ENCODE measurements at regions of chr11 and their contacts with region 1.

Region 1: DNA sequence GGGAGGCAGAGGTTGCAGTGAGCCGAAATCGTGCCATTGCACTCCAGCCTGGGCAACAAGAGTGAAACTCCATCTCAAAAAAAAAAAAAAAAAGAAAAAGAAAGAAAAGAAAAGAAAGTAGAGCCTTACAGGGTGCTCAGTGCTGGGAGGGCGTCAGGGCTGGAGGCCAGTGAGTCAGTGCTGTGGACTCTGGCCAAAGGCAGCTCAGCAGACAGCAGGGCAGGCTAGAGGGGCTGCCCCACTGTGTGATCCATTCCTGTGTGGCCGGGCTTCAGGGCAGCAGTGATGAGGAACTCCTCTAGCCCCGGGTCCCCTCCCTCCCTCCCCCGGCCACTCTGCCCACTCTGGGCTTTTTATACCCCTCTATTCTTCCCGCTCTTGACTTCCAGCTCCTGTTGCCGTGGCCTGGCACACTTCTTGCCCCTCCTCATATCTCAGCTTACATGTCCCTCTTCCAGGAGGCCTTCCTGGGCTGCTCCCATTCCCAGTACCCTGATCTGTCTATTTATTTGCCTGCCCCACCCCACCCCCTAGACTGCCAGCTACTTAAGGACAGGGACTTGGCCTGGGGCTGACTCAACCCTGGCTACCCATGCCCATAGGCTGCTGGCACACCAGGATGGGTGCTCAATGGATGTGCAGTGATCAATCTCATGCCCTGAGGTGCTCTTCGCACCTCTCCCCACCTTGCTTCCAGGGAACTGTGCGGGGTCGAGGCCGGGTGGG is 10.1 kb downstream of the SYT12 start:
- DNase-seq: peak; percentile 94
- ATAC-seq: peak; percentile 88
- H3K4me3 ChIP-seq: no peak overlapping the region
- H3K27ac ChIP-seq: peak overlapping the region; percentile 62
- H3K4me1 ChIP-seq: peaks cover 16% of the 10 kb centered on the region
- H3K27me3 ChIP-seq: 0 out of 2 replicates have a peak, but pooled peaks cover 2% of the 10 kb centered on the region
- CTCF ChIP-seq: no peak
- POLR2A ChIP-seq: no peak
- RAD21 ChIP-seq: peak; percentile 28

Region 2: GRCh38 chr11:66842896-66843775 is 189.9 kb before region 1 on chr11 and contains the start of gene RCE1:
- CTCF ChIA-PET with region 1: no interaction called
- POLR2A ChIA-PET with region 1: no interaction called
- dilution Hi-C with region 1: no loop called
- in situ Hi-C with region 1: no loop called
- intact Hi-C with region 1: loop called (anchors 5 kb)
- DNase-seq: peak; percentile 85
- ATAC-seq: peak; percentile 90
- H3K4me3 ChIP-seq: peak within 1 kb of the TSS; percentile 81
- H3K27ac ChIP-seq: peak within 1 kb of the TSS; percentile 97
- H3K4me1 ChIP-seq: peaks cover 6% of the 10 kb centered on the region
- H3K27me3 ChIP-seq: no peaks in the 10 kb centered on the region
- CTCF ChIP-seq: no peak
- POLR2A ChIP-seq: peak; percentile 94
- RAD21 ChIP-seq: no peak
- total RNA-seq, gene RCE1: 5.6 and 6.6 TPM in 2 replicates

Region 3: DNA sequence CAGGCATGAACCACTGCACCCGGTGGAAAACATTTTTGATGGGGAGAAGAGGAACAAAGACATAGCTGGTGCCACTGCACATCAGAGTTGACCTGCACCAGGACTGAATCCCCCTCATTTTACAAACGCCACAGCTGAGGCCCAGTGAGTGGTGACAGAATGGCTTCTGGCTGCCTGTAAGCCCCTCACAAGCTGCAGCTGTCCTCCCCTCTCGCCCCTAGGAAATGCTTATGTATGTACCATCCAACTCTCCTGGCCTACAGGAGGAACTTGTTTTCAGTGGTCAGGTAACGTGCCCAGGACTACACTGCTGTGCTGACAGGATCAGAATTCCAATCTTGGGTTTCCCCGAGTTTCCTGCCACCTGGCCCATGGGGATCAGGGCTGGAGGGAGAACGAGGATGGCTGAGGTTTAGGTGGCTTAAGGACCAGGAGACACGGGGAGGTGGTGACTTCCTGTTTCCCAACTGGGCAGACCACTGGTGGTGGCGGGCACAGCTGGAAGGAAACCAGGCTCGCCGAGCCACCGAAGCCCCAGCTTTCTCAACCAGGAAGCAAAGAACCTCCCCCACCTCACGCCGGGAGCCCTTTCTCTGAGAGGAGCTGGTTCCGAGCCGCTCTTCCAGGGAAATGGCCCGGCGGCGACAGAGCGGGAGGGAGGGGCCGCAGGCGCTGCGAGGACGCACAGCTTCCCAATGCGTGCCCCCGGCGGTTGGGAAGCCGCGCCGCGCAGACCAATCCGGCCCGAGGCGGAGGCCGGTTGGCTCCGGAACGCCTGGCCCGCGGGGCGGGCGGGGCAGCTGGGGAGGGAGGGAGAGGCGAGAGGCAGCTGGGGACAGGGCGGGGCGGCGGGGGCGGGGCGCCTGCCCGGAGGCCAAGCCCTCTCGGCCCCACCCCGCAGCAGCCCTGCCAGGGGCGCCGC is 177.2 kb before region 1 on chr11:
- CTCF ChIA-PET with region 1: no interaction called
- POLR2A ChIA-PET with region 1: no interaction called
- dilution Hi-C with region 1: no loop called
- in situ Hi-C with region 1: no loop called
- intact Hi-C with region 1: loop called (anchors 5 kb)
- DNase-seq: peak; percentile 84
- ATAC-seq: peak; percentile 95
- H3K4me3 ChIP-seq: peak overlapping the region; percentile 57
- H3K27ac ChIP-seq: peak overlapping the region; percentile 78
- H3K4me1 ChIP-seq: peaks cover 4% of the 10 kb centered on the region
- H3K27me3 ChIP-seq: no peaks in the 10 kb centered on the region
- CTCF ChIP-seq: 0 out of 2 replicates have a peak, but pooled peaks have one; percentile 4
- POLR2A ChIP-seq: peak; percentile 78
- RAD21 ChIP-seq: no peak

Region 4: DNA sequence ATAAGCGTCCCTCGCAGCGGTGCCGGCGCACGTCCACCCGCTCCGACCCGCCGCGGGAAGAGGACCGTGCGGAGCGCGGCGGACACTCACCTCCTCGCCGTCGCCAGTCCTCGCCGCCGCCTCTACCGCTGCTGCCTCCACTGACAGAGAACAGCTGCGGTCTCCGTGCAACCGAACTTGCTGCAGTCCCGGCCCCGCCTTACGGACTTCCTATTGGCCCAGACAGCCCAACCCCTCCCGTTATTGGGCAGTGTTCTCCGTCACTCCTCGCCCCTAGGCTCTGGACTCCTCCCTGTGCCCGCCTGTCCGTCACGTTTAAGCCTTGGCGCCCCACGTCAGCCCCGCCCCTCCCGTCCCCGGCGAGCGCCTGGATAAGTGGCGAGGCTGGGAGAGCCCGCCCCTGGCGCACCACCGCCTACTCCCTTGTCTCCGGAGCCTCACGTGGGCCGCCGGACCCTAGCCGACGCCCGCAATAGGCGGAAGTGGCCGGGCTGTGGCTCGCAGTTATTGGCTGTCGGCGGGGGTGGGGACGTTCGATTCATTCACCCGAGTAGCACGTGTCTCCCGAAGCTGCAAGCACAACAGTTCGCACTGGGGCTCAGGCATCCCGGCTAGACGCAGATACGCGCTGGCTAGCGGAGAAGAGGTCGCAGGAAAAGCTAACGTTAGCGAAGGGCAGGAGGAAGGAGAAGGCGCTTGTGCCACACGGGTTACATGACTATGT is 74.6 kb before region 1 on chr11 and contains the start of gene PC:
- CTCF ChIA-PET with region 1: no interaction called
- POLR2A ChIA-PET with region 1: no interaction called
- dilution Hi-C with region 1: no loop called
- in situ Hi-C with region 1: no loop called
- intact Hi-C with region 1: loop called (anchors 2 kb)
- DNase-seq: peak; percentile 100
- ATAC-seq: peak; percentile 96
- H3K4me3 ChIP-seq: peak within 1 kb of the TSS; percentile 73
- H3K27ac ChIP-seq: peak within 1 kb of the TSS; percentile 68
- H3K4me1 ChIP-seq: peaks cover 16% of the 10 kb centered on the region
- H3K27me3 ChIP-seq: no peaks in the 10 kb centered on the region
- CTCF ChIP-seq: no peak
- POLR2A ChIP-seq: peak; percentile 92
- RAD21 ChIP-seq: peak; percentile 24
- total RNA-seq, gene PC: 9.7 and 13.6 TPM in 2 replicates

Measured in IMR-90 (cell line).